Endothelial cell of umbilical vein (primary cell): ENCODE measurements at regions of chr3 and their contacts with region 1.

Region 1: DNA sequence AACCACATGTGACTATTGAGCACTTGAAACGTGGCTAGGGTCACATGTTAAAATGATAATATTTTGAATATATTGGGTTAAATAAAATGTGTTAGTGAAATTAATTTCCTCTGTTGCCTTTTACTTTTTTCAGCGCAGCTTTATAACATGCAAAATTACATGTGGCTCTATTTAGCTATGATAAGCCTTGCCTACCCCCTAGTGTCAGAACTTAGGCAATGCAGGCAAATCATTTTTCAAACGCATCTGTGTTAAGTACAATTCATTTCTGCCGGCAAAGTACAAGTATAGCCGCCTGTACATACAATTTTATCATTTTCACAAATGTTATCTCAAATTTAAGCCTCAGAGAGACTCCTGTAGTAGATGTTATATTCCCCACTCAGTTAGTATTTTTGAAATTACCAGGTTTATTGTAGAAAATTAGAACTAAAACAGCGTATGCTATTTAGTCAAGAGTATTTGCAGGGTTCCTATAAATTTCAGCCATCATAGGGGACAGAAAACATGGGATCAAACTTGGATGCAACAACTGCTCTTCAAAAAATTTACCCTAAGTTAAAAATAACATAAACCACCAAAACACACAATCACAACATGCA is 56.1 kb downstream of the TAFA4 start:
- DNase-seq: peak; percentile 73
- H3K4me3 ChIP-seq: no peak overlapping the region
- H3K27ac ChIP-seq: no peak overlapping the region
- H3K4me1 ChIP-seq: no peaks in the 10 kb centered on the region
- H3K27me3 ChIP-seq: peaks cover 3 to 4% of the 10 kb centered on the region in 2 experiments
- CTCF ChIP-seq: peak; percentile 55 to 71
- POLR2A ChIP-seq: no peak

Region 2: GRCh38 chr3:66938338-66938963 is 1937.8 kb before region 1 on chr3:
- CTCF ChIA-PET with region 1: interaction called, 63 read pairs
- POLR2A ChIA-PET with region 1: no interaction called
- dilution Hi-C with region 1: no loop called
- intact Hi-C with region 1: loop called (anchors 1 kb)
- DNase-seq: peak; percentile 61
- H3K4me3 ChIP-seq: no peak overlapping the region
- H3K27ac ChIP-seq: no peak overlapping the region
- H3K4me1 ChIP-seq: no peaks in the 10 kb centered on the region
- H3K27me3 ChIP-seq: peaks cover 0 to 2% of the 10 kb centered on the region in 2 experiments
- CTCF ChIP-seq: peak; percentile 58 to 66
- POLR2A ChIP-seq: no peak

Region 3: GRCh38 chr3:68866157-68866556 is 10.1 kb before region 1 on chr3:
- CTCF ChIA-PET with region 1: interaction called, 10 read pairs
- POLR2A ChIA-PET with region 1: no interaction called
- dilution Hi-C with region 1: no loop called
- intact Hi-C with region 1: no loop called
- DNase-seq: no peak
- H3K4me3 ChIP-seq: no peak overlapping the region
- H3K27ac ChIP-seq: no peak overlapping the region
- H3K4me1 ChIP-seq: no peaks in the 10 kb centered on the region
- H3K27me3 ChIP-seq: peaks cover 0 to 3% of the 10 kb centered on the region in 2 experiments
- CTCF ChIP-seq: no peak
- POLR2A ChIP-seq: no peak

Region 4: DNA sequence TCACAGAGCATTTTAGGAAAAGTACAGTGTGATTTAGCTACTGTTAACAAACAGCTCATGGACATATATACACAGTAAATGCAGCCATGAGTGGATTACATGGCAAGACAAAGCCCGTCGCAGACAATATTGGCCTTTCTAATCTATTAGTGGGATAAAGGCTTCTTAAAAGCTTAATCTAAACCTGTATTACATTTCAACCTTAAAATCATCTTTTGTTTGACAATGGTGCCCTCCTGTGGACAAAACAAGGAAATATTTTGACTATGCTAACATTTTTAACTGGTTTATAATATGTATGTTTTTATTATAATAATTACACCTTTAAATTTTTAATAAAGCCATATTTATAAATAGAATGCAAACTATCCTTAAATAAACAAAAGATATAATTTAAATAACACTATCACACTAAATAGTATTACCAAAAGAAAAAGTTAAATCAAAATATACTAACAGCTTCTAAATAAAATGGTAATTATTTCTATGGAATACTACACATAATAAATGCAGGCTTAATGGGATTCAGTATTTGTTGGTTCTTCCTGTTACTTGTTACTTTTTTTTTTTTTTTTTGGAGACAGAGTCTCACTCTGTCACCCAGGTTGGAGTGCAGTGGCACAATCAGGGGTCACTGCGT is 17.5 kb after region 1 on chr3:
- CTCF ChIA-PET with region 1: interaction called, 12 read pairs
- POLR2A ChIA-PET with region 1: no interaction called
- dilution Hi-C with region 1: no loop called
- intact Hi-C with region 1: no loop called
- DNase-seq: peak; percentile 63
- H3K4me3 ChIP-seq: no peak overlapping the region
- H3K27ac ChIP-seq: no peak overlapping the region
- H3K4me1 ChIP-seq: no peaks in the 10 kb centered on the region
- H3K27me3 ChIP-seq: peaks cover 4 to 5% of the 10 kb centered on the region in 2 experiments
- CTCF ChIP-seq: peak in 1 of 2 donors; percentile 15
- POLR2A ChIP-seq: no peak

Region 5: GRCh38 chr3:68972358-68972979 is 96.3 kb after region 1 on chr3:
- CTCF ChIA-PET with region 1: interaction called, 3 read pairs
- POLR2A ChIA-PET with region 1: no interaction called
- dilution Hi-C with region 1: no loop called
- intact Hi-C with region 1: loop called (anchors 2 kb)
- DNase-seq: peak; percentile 65
- H3K4me3 ChIP-seq: no peak overlapping the region
- H3K27ac ChIP-seq: no peak overlapping the region
- H3K4me1 ChIP-seq: peaks cover 12% of the 10 kb centered on the region
- H3K27me3 ChIP-seq: peaks cover 10 to 21% of the 10 kb centered on the region in 2 experiments
- CTCF ChIP-seq: peak; percentile 89 to 90
- POLR2A ChIP-seq: no peak